ENCODE measurements at regions of chr7 and their contacts with region 1.

Region 1: DNA sequence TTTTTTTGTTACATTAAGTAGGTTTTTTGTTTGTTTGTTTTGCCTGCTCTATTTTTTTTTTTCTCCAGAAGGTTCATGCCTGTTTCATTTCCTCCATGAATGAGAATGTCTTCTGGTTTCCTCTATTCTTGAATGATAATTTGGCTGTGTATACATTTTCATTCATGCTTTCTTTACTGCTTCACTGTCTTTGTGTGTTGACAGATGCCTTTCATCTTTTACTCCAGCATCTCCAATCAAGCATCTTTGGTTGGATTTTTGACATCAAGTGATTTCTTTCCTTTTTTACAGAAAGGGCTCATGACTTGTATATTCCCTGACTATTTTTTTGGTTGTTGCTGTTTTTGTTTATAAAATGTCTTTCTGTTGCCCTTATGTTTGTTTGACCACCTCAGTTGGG is 156.5 kb downstream of the MDFIC start:
- DNase-seq: no peak
- ATAC-seq: no peak
- H3K4me3 ChIP-seq: no peak overlapping the region
- H3K27ac ChIP-seq: no peak overlapping the region
- H3K4me1 ChIP-seq: no peaks in the 10 kb centered on the region
- H3K27me3 ChIP-seq: no peaks in the 10 kb centered on the region
- CTCF ChIP-seq: no peak

Region 2: DNA sequence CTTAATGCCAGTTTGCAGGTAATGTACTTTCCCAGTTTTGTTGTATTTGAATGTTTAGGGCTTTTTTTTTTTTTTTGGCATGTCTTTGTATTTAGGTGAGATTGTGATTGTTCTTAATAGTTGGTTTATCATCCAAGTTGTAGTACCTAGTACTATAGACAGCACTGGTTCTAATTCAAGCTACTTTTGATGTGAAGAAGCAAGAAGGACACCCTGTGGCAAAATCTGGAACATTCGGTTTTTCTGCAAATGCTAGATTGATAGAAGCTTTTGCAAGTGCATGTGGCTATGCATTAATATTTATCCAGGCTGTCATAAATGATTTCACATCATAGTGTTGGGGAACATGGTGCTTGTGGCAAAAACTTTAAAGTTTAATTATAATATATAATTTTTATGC is 414.9 kb before region 1 on chr7:
- intact Hi-C with region 1: loop called in 1 of 2 experiments (anchors 5 kb)
- DNase-seq: no peak
- ATAC-seq: peak in 1 of 4 donors; percentile 63
- H3K4me3 ChIP-seq: no peak overlapping the region
- H3K27ac ChIP-seq: no peak overlapping the region
- H3K4me1 ChIP-seq: no peaks in the 10 kb centered on the region
- H3K27me3 ChIP-seq: no peaks in the 10 kb centered on the region
- CTCF ChIP-seq: no peak